ENCODE measurements at regions of chr13 and their contacts with region 1.

Region 1: DNA sequence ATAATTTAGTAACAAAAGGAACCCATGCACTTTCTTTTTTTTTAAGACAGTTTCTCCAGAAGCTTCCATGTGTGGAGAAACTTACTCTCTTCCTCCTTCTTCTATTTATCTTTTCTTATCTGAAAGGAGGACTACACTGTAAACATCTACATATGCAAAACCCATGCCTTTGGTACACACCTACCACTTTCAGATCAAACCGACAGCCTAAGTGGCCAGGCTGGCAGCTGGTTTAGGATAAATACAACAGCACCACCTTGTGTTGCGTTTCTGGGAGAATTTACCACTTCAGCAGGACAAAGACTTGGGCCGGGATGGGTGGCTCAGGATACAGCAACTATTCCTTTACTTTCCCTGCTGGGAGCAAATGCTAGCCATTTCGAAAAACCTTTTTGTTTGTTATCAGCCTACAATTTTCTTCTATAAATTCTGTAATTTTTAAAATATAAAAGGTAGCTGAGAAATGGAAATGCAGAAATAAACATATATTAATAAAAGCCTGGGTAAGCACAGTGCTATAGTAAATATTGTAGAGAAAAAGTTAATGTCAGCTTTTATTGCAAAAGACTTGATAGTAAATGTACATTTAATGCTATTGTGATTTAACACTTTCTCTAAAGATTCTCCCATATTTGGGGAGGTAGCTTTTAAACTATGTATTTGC is 94.0 kb upstream of the RFC3 start:
- DNase-seq: peak; percentile 91
- H3K4me3 ChIP-seq: no peak overlapping the region
- H3K27ac ChIP-seq: peak overlapping the region; percentile 24
- H3K4me1 ChIP-seq: peaks cover 54% of the 10 kb centered on the region
- CTCF ChIP-seq: peak; percentile 91

Region 2: GRCh38 chr13:33110713-33111413 is 613.0 kb before region 1 on chr13:
- CTCF ChIA-PET with region 1: no interaction called
- POLR2A ChIA-PET with region 1: no interaction called
- intact Hi-C with region 1: loop called (anchors 10 kb)
- DNase-seq: peak; percentile 32
- H3K4me3 ChIP-seq: no peak overlapping the region
- H3K27ac ChIP-seq: no peak overlapping the region
- H3K4me1 ChIP-seq: peaks cover 15% of the 10 kb centered on the region
- CTCF ChIP-seq: no peak

Region 3: GRCh38 chr13:33228648-33229445 is 495.1 kb before region 1 on chr13:
- CTCF ChIA-PET with region 1: no interaction called
- POLR2A ChIA-PET with region 1: interaction called, 4 read pairs
- intact Hi-C with region 1: loop called (anchors 1 kb)
- DNase-seq: peak; percentile 64
- H3K4me3 ChIP-seq: no peak overlapping the region
- H3K27ac ChIP-seq: no peak overlapping the region
- H3K4me1 ChIP-seq: no peaks in the 10 kb centered on the region
- CTCF ChIP-seq: peak; percentile 96

Region 4: DNA sequence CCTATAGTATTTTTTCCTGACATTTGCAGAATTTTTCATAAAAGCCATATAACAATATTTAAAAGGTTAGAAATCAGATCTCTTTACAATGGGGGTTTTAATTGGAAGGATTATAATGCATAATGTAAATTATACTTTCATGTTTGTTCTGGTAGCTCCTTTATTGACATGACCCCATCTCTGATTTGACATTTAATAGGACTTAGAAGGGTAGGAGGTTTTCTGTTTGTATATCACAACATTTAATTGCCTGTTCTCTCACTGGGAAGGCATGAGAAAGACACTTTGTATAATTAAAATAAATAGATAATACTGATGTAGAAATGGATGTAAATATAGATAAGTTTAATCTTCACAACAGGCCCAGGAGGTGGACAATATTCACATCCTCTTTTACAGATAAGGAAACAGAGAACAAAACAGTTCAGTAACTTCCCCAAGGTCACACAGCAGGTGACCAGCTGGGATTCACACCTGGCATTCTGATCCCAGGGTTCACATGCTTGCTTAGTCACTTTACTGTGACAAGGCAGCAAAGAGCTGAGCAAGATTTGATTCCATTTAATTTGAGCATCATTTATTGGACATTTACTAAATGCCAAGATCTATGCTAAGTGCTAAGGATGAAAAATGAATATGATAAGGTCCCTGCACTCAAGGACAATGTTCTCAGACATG is 344.5 kb before region 1 on chr13:
- CTCF ChIA-PET with region 1: no interaction called
- POLR2A ChIA-PET with region 1: no interaction called
- intact Hi-C with region 1: no loop called
- DNase-seq: no peak
- H3K4me3 ChIP-seq: no peak overlapping the region
- H3K27ac ChIP-seq: no peak overlapping the region
- H3K4me1 ChIP-seq: no peaks in the 10 kb centered on the region
- CTCF ChIP-seq: no peak

Region 5: DNA sequence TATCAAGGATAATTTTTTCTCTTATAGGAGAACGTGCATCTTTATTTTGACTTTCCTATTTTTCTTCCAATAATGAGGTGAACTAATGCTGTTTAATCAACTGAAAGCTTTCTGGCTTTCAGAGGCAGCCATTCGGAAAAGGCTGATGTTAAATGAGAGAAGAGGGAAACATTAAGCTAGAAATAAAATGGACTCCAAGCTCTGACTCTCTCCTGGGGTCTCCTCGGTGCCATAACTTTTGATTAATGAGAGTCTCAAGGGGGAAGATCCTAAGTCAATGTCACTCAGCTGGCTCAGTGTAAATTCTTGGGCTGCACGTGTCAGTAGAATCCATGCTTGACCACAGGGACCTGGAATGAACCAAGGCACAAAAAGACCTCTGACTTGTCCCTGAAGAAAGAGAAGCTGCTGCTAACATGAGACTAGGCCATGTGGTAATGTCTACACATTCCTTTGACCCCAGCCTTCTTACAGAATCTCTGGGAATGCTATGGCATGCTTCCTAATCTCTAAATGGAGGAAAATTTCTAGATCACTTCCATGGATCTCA is 58.2 kb before region 1 on chr13:
- CTCF ChIA-PET with region 1: no interaction called
- POLR2A ChIA-PET with region 1: no interaction called
- intact Hi-C with region 1: no loop called
- DNase-seq: no peak
- H3K4me3 ChIP-seq: no peak overlapping the region
- H3K27ac ChIP-seq: no peak overlapping the region
- H3K4me1 ChIP-seq: no peaks in the 10 kb centered on the region
- CTCF ChIP-seq: no peak

Region 6: GRCh38 chr13:34076943-34077703 is 353.2 kb after region 1 on chr13:
- CTCF ChIA-PET with region 1: no interaction called
- POLR2A ChIA-PET with region 1: no interaction called
- intact Hi-C with region 1: loop called (anchors 5 kb)
- DNase-seq: peak; percentile 62
- H3K4me3 ChIP-seq: no peak overlapping the region
- H3K27ac ChIP-seq: no peak overlapping the region
- H3K4me1 ChIP-seq: peaks cover 9% of the 10 kb centered on the region
- CTCF ChIP-seq: peak; percentile 93

Measured in OCI-LY7 (cell line).